ENCODE measurements at regions of chr6 and their contacts with region 1.

Region 1: GRCh38 chr6:139161817-139162284 is 27.0 kb downstream of the HECA start:
- DNase-seq: peak; percentile 85
- ATAC-seq: peak; percentile 86
- H3K4me3 Mint-ChIP-seq: peak overlapping the region; percentile 59
- H3K27ac Mint-ChIP-seq: peak overlapping the region; percentile 97
- H3K4me1 Mint-ChIP-seq: peaks cover 91% of the 10 kb centered on the region
- H3K27me3 Mint-ChIP-seq: no peaks in the 10 kb centered on the region

Region 2: GRCh38 chr6:139146317-139146726 is 15.5 kb before region 1 on chr6:
- CTCF ChIA-PET with region 1: interaction called, 53 read pairs
- POLR2A ChIA-PET with region 1: interaction called, 20 read pairs
- intact Hi-C with region 1: loop called (anchors 1 kb)
- DNase-seq: peak; percentile 60
- ATAC-seq: peak; percentile 71
- H3K4me3 Mint-ChIP-seq: peak overlapping the region; percentile 53
- H3K27ac Mint-ChIP-seq: peak overlapping the region; percentile 99
- H3K4me1 Mint-ChIP-seq: peaks cover 96% of the 10 kb centered on the region
- H3K27me3 Mint-ChIP-seq: no peaks in the 10 kb centered on the region

Region 3: DNA sequence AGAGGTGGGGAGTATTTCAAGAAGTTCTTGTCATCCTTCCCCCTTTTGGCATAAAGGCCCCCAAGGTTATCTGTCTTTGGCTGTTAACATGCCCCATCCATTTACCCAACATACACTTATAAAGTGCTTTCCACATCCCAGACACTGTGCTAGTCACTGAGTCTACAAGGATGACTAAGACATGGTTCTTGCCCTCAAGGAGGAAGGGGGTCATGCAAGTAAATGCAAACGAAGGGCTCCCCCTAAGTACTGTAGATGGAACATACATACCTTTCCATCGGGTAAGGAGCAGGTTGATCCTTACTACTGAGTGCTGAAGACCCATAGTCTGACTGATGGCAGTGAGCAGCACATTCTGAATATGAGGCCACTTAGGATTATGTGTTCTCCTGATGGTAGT is 11.3 kb after region 1 on chr6:
- CTCF ChIA-PET with region 1: interaction called, 5 read pairs
- POLR2A ChIA-PET with region 1: interaction called, 15 read pairs
- intact Hi-C with region 1: loop called (anchors 1 kb)
- DNase-seq: no peak
- ATAC-seq: peak; percentile 89
- H3K4me3 Mint-ChIP-seq: no peak overlapping the region
- H3K27ac Mint-ChIP-seq: peak overlapping the region; percentile 87
- H3K4me1 Mint-ChIP-seq: peaks cover 91% of the 10 kb centered on the region
- H3K27me3 Mint-ChIP-seq: no peaks in the 10 kb centered on the region

Region 4: GRCh38 chr6:139271056-139271455 is 109.2 kb after region 1 on chr6:
- CTCF ChIA-PET with region 1: no interaction called
- POLR2A ChIA-PET with region 1: no interaction called
- intact Hi-C with region 1: no loop called
- DNase-seq: no peak
- ATAC-seq: no peak
- H3K4me3 Mint-ChIP-seq: no peak overlapping the region
- H3K27ac Mint-ChIP-seq: no peak overlapping the region
- H3K4me1 Mint-ChIP-seq: peaks cover 3% of the 10 kb centered on the region
- H3K27me3 Mint-ChIP-seq: no peaks in the 10 kb centered on the region

Region 5: GRCh38 chr6:139369568-139370282 is 207.9 kb after region 1 on chr6:
- CTCF ChIA-PET with region 1: interaction called, 8 read pairs
- POLR2A ChIA-PET with region 1: interaction called, 11 read pairs
- intact Hi-C with region 1: no loop called
- DNase-seq: peak; percentile 32
- ATAC-seq: no peak
- H3K4me3 Mint-ChIP-seq: peak overlapping the region; percentile 12
- H3K27ac Mint-ChIP-seq: peak overlapping the region; percentile 49
- H3K4me1 Mint-ChIP-seq: peaks cover 37% of the 10 kb centered on the region
- H3K27me3 Mint-ChIP-seq: no peaks in the 10 kb centered on the region